ENCODE measurements at regions of chr6 and their contacts with region 1.

Region 1: GRCh38 chr6:37137201-37138090 is 32.5 kb upstream of the PIM1 start:
- DNase-seq: peak; percentile 81
- H3K4me3 Mint-ChIP-seq: peak overlapping the region; percentile 66
- H3K27ac Mint-ChIP-seq: peak overlapping the region; percentile 84
- H3K4me1 Mint-ChIP-seq: peaks cover 54% of the 10 kb centered on the region
- H3K27me3 Mint-ChIP-seq: no peaks in the 10 kb centered on the region

Region 2: GRCh38 chr6:36929607-36930006 is 207.8 kb before region 1 on chr6:
- CTCF ChIA-PET with region 1: no interaction called
- POLR2A ChIA-PET with region 1: no interaction called
- intact Hi-C with region 1: no loop called
- DNase-seq: no peak
- H3K4me3 Mint-ChIP-seq: no peak overlapping the region
- H3K27ac Mint-ChIP-seq: no peak overlapping the region
- H3K4me1 Mint-ChIP-seq: peaks cover 25% of the 10 kb centered on the region
- H3K27me3 Mint-ChIP-seq: no peaks in the 10 kb centered on the region

Region 3: GRCh38 chr6:37102279-37103168 is 34.9 kb before region 1 on chr6:
- CTCF ChIA-PET with region 1: interaction called, 3 read pairs
- POLR2A ChIA-PET with region 1: interaction called, 6 read pairs
- intact Hi-C with region 1: loop called (anchors 5 kb)
- DNase-seq: peak; percentile 87
- H3K4me3 Mint-ChIP-seq: peak overlapping the region; percentile 65
- H3K27ac Mint-ChIP-seq: peak overlapping the region; percentile 79
- H3K4me1 Mint-ChIP-seq: peaks cover 30% of the 10 kb centered on the region
- H3K27me3 Mint-ChIP-seq: no peaks in the 10 kb centered on the region

Region 4: DNA sequence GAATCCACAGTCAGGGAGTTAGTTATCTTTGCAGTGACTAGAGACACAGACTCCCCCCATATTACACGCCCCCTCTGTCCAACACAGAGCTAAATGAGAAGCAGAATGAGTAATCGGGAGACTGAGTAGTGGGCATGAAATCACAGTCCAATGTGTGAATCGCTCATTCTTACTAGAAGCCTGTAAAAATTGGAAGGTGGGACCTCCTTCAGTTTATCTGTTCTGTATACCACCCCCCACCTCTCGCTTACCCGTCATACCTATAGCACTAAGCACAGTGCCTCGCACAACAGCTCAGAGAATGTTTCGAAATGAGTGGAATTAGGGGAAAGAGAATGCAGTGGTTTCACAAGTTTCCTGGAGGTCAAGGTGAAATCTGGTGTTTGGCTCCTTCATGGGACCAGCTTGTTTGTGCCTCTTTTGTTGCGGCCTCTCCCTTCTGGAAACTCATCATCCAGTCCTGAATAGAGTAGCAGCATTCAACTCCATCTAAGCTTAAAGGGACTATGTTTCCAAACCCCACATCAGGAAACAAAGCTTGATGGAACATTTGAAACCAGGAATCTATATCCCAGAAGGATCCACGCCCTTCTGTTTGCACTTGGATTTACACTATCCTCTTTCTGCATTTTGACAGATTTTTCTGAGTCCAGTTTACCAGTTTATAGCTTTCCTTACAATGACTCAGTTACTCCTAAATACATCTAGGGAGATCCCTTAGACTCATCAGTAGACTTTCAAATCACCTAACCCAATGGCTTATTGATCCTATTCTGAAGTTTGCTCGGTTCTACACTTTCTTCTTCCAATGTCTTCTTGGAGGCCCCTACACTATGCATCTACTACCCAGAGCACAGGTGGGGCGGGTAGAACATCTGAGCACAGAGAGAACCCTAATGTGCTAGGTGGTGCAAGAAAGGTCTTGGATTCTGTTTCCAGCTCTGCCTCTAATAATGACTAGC is 26.7 kb before region 1 on chr6:
- CTCF ChIA-PET with region 1: interaction called, 3 read pairs
- POLR2A ChIA-PET with region 1: interaction called, 10 read pairs
- intact Hi-C with region 1: loop called (anchors 1 kb)
- DNase-seq: peak; percentile 75
- H3K4me3 Mint-ChIP-seq: no peak overlapping the region
- H3K27ac Mint-ChIP-seq: peak overlapping the region; percentile 82
- H3K4me1 Mint-ChIP-seq: peaks cover 28% of the 10 kb centered on the region
- H3K27me3 Mint-ChIP-seq: no peaks in the 10 kb centered on the region

Region 5: DNA sequence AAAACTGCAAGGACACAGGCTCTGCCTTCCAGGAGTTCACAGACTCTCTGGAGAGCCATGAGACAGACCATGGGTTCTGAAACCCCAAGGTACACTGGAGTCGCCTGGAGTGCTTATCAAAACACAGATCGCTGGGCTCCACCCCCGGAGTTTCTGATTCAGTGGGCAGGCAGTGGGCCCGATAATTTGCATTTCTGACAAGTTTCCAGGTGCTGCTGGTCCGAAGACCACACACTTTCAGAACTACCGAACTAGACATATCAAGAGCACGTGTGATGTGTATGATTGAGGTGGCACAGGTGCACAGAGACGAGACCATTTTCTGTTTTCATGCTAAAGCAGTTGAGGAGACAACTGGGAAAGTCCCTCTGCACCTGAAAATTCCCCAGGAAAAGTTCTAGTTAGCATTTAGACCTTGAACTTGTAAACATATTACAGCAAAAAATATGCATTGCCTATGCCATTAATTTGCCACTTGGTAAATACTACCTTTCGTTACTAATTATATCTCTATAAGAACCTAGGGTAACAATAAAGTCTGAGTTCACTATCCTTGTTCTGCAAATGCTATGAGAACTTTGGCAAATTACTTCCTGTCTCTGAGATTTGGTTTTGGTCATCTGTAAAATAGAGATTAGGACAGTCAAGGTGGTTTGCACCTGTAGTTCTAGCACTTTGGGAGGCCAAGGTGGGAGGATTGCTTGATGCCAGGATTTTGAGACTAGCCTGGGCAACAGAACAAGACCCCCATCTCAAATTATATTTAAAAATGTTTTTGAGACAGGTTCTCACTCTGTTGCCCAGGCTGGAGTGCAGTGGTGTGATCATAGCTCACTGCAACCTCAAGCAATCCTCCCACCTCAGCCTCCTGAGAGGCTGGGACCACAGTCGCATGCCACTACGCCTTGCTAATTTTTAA is 18.2 kb after region 1 on chr6:
- CTCF ChIA-PET with region 1: interaction called, 3 read pairs
- POLR2A ChIA-PET with region 1: no interaction called
- intact Hi-C with region 1: loop called (anchors 1 kb)
- DNase-seq: peak; percentile 90
- H3K4me3 Mint-ChIP-seq: peak overlapping the region; percentile 48
- H3K27ac Mint-ChIP-seq: peak overlapping the region; percentile 83
- H3K4me1 Mint-ChIP-seq: peaks cover 41% of the 10 kb centered on the region
- H3K27me3 Mint-ChIP-seq: no peaks in the 10 kb centered on the region

Measured in activated CD4-positive, alpha-beta memory T cell treated with anti-CD3 and anti-CD28 coated beads for 36 hours (primary cell).